ENCODE measurements at regions of chr13 and their contacts with region 1.

Region 1: DNA sequence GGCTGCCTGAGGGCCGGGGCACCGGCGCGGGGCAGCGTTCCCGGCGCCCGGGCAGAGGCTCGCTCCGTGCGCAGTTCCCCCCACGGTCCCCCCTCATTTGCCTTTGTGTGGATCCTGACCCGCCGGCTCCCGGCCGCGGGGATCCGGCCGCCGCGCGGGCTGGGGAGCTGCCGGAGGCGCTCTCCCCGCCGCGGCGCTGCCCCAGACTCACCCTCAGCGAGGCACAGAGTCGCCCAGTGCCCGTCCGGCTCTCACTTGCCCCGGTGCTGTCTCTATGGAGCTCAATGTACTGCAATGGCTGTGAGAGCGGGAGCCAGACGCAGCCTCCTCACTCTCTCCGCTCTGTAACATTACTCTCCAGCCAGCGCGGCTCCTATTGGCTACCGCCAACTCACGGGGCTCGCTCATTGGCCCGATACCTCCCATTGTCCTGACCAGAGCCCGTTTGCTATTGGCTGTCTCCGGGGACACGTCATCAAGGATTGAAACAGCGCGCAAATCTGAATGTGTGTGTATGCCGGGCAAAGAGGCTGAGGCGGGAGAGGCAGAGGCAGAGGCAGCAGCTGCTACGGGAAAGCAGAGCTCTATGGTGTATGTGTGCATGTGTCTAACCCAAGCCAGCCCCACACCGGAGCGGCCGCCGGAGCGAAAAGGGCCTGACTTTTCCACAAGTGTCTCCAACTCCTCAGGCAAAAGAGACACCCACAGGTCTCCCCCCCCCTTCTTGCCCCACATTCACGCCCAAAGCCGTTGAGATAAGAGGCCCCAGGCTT is at the start of gene HMGB1:
- DNase-seq: peak; percentile 93 to 98 (median 96)
- ATAC-seq: peak; percentile 85
- H3K4me3 ChIP-seq: peak within 1 kb of the TSS; percentile 54 to 97
- H3K4me3 Mint-ChIP-seq: peak within 1 kb of the TSS; percentile 95
- H3K27ac ChIP-seq: peak within 1 kb of the TSS; percentile 60 to 97
- H3K27ac Mint-ChIP-seq: peak within 1 kb of the TSS; percentile 99
- H3K4me1 ChIP-seq: peaks cover 26% of the 10 kb centered on the region
- H3K4me1 Mint-ChIP-seq: peaks cover 27% of the 10 kb centered on the region
- H3K27me3 ChIP-seq: no peaks in the 10 kb centered on the region
- H3K27me3 Mint-ChIP-seq: no peaks in the 10 kb centered on the region
- CTCF ChIP-seq: no peak
- total RNA-seq, gene HMGB1: 445 to 453 TPM

Region 2: DNA sequence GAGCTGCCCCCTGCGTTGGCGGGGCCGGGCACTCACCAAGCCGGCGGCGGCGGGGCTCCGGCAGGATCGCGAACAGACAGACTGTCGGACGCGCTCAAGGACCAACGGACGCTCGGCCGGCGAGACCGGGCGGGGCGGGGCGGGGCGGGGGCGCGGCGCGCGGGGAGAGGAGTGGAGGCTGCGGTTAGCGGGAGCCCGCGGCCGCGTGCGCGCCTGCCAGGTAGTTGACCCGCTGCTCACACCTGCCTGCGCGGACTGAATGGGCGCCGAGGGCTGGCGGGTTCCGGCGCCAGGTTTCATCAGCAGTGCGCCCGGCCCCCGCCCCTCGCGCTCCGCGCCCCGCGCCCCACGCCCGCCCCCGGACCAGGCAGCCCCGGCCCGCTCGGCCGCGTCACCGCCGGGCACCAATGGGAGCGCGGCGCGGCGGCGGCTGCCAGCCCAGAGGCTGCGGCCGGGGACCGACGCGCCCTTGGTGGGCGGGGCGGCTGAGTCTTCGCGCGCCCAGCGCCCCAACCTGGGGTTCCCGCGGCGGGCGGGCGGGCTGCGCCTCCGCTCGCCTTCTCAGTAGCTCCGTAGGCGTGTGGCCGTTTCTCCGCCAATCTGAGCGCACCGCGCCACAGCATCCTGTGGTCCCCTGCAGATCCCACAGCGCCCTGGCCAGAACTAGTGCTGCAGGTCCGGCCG is 870.2 kb before region 1 on chr13 and contains the start of gene SLC7A1:
- CTCF ChIA-PET with region 1: no interaction called
- POLR2A ChIA-PET with region 1: no interaction called
- intact Hi-C with region 1: loop called in 1 of 2 experiments (anchors 5 kb)
- DNase-seq: peak; percentile 67 to 93 (median 79)
- ATAC-seq: peak; percentile 88
- H3K4me3 ChIP-seq: peak within 1 kb of the TSS; percentile 61 to 74
- H3K4me3 Mint-ChIP-seq: peak within 1 kb of the TSS; percentile 90
- H3K27ac ChIP-seq: peak within 1 kb of the TSS; percentile 63 to 73
- H3K27ac Mint-ChIP-seq: peak within 1 kb of the TSS; percentile 85
- H3K4me1 ChIP-seq: peaks cover 15% of the 10 kb centered on the region
- H3K4me1 Mint-ChIP-seq: peaks cover 36% of the 10 kb centered on the region
- H3K27me3 ChIP-seq: no peaks in the 10 kb centered on the region
- H3K27me3 Mint-ChIP-seq: no peaks in the 10 kb centered on the region
- CTCF ChIP-seq: no peak
- total RNA-seq, gene SLC7A1: 15.2 to 18.4 TPM

Region 3: DNA sequence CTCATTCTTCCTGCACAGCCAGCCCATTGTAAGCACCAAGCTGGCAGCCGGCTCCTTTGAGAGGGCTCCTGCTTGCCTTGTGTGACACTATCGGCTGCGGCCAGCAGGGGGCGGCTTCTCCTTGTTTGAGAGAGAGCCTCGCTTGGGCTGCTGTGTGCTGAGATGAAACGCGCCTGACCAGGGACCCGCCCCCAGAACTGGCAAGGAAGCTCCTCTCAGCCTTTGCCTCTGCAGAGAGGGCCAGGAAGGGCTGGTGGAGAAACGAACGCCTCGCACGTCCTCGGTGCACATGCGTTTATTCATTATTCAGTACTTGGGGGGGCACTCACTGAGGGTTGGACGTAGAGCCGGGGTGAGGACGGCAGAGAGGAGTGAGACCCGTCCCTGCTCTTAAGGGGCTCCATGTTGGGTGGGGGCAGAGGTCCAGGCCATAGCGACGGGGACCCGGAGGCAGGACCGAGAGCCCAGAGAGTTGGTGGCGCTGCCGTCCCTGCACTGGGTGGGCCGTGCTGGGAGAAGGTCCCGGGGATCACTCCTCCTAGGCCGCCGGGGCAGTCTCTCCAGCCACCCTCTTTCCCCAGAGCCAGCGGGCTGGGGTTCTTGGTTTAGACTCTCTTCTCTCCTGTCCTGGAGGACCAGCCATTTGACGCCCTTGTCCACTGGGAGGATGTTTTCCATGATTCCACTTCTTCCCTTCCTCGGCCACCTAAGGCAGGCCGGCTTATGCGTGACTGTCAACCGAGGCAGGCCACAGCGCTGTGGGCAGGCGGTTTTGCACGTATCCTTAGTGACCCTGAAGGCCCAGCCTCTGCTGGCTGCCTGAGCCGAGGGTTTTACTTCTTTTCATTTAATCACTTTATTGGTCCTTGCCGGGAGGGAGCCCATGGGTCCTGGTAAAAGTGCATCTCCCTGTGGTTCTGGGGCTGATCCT is 332.9 kb before region 1 on chr13:
- CTCF ChIA-PET with region 1: interaction called, 28 read pairs
- POLR2A ChIA-PET with region 1: interaction called, 10 read pairs
- intact Hi-C with region 1: loop called (anchors 1 kb)
- DNase-seq: peak; percentile 92 to 100 (median 97)
- ATAC-seq: peak; percentile 100
- H3K4me3 ChIP-seq: no peak overlapping the region
- H3K4me3 Mint-ChIP-seq: peak overlapping the region; percentile 65
- H3K27ac ChIP-seq: no peak overlapping the region
- H3K27ac Mint-ChIP-seq: peak overlapping the region; percentile 77
- H3K4me1 ChIP-seq: peaks cover 9% of the 10 kb centered on the region
- H3K4me1 Mint-ChIP-seq: peaks cover 12% of the 10 kb centered on the region
- H3K27me3 ChIP-seq: no peaks in the 10 kb centered on the region
- H3K27me3 Mint-ChIP-seq: no peaks in the 10 kb centered on the region
- CTCF ChIP-seq: peak; percentile 79

Region 4: DNA sequence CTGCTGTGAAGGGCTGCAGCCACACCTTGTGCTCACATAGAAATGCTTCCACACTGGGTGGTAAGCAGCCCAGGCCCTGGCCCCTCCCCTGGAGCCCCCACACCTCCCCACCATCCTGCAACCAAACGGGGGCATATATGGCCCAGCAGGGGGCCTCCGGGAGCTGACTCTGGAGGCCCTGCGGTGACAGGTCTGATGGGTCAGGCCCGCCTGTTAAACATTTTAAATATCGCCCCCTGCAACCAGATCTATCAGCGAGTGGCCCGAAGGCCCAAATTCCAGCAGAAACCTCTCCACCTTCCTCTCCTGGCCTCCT is 110.4 kb before region 1 on chr13:
- CTCF ChIA-PET with region 1: interaction called, 13 read pairs
- POLR2A ChIA-PET with region 1: interaction called, 3 read pairs
- intact Hi-C with region 1: loop called (anchors 1 kb)
- DNase-seq: peak; percentile 12 to 76 (median 60)
- ATAC-seq: peak; percentile 96
- H3K4me3 ChIP-seq: no peak overlapping the region
- H3K4me3 Mint-ChIP-seq: peak overlapping the region; percentile 47
- H3K27ac ChIP-seq: no peak overlapping the region
- H3K27ac Mint-ChIP-seq: peak overlapping the region; percentile 37
- H3K4me1 ChIP-seq: peaks cover 18% of the 10 kb centered on the region
- H3K4me1 Mint-ChIP-seq: peaks cover 25% of the 10 kb centered on the region
- H3K27me3 ChIP-seq: no peaks in the 10 kb centered on the region
- H3K27me3 Mint-ChIP-seq: no peaks in the 10 kb centered on the region
- CTCF ChIP-seq: peak; percentile 64

Region 5: GRCh38 chr13:30520571-30520970 is 54.8 kb after region 1 on chr13:
- CTCF ChIA-PET with region 1: no interaction called
- POLR2A ChIA-PET with region 1: no interaction called
- intact Hi-C with region 1: no loop called
- DNase-seq: no peak
- ATAC-seq: no peak
- H3K4me3 ChIP-seq: no peak overlapping the region
- H3K4me3 Mint-ChIP-seq: no peak overlapping the region
- H3K27ac ChIP-seq: no peak overlapping the region
- H3K27ac Mint-ChIP-seq: no peak overlapping the region
- H3K4me1 ChIP-seq: peaks cover 9% of the 10 kb centered on the region
- H3K4me1 Mint-ChIP-seq: peaks cover 9% of the 10 kb centered on the region
- H3K27me3 ChIP-seq: no peaks in the 10 kb centered on the region
- H3K27me3 Mint-ChIP-seq: no peaks in the 10 kb centered on the region
- CTCF ChIP-seq: no peak

Region 6: GRCh38 chr13:30551189-30551588 is 85.4 kb after region 1 on chr13:
- CTCF ChIA-PET with region 1: interaction called, 3 read pairs
- POLR2A ChIA-PET with region 1: no interaction called
- intact Hi-C with region 1: loop called (anchors 1 to 5 kb)
- DNase-seq: peak in 3 of 9 experiments; percentile 11 to 67 (median 52)
- ATAC-seq: peak; percentile 83
- H3K4me3 ChIP-seq: no peak overlapping the region
- H3K4me3 Mint-ChIP-seq: no peak overlapping the region
- H3K27ac ChIP-seq: no peak overlapping the region
- H3K27ac Mint-ChIP-seq: no peak overlapping the region
- H3K4me1 ChIP-seq: no peaks in the 10 kb centered on the region
- H3K4me1 Mint-ChIP-seq: peaks cover 5% of the 10 kb centered on the region
- H3K27me3 ChIP-seq: no peaks in the 10 kb centered on the region
- H3K27me3 Mint-ChIP-seq: no peaks in the 10 kb centered on the region
- CTCF ChIP-seq: peak; percentile 33

Region 7: DNA sequence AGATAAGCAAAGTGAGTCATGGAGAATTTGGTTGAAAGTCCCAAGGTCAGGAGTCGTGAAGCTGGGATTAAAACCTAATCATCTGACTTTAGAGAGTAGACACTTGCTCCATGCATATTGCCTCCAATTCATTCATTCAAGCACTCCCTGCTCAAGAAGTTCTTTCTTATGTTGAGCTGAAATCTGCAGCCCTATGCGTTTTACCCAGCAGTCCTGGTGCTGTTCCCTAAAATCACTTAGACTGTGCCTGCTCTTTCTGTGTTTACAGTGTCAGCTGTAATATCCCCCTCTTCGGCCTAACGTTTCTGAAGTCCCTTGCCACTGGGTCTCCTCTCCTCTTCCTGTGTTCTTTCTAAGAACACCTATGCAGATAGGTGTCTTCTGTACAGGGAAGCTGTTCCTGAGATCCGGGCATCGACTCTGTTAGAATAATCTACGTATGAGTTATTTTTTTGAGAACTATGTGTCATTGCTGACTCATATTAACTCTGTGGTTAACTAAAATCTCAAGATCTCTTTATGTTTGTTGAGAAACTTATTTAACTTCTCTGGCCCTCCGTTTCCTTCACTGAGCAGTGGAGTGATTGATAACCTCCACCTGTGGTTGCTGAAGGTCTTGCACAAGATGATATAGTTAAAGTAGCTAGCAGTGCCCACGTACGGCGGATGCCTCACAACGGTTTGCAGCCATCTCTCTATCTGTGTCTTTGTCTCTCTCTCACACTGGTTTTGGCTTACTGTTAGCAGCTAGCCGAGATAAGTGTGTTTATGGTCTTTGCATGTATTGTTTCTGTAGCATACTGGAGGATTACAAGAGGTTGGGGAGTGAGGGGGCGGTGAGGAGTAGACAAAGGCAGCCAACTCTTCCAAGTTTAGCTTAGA is 274.2 kb after region 1 on chr13:
- CTCF ChIA-PET with region 1: no interaction called
- POLR2A ChIA-PET with region 1: no interaction called
- intact Hi-C with region 1: loop called (anchors 5 kb)
- DNase-seq: peak in 8 of 9 experiments; percentile 34 to 87 (median 62)
- ATAC-seq: peak; percentile 54
- H3K4me3 ChIP-seq: peak overlapping the region; percentile 25 to 33
- H3K4me3 Mint-ChIP-seq: peak overlapping the region; percentile 73
- H3K27ac ChIP-seq: peak overlapping the region; percentile 28 to 68
- H3K27ac Mint-ChIP-seq: peak overlapping the region; percentile 82
- H3K4me1 ChIP-seq: peaks cover 73% of the 10 kb centered on the region
- H3K4me1 Mint-ChIP-seq: peaks cover 83% of the 10 kb centered on the region
- H3K27me3 ChIP-seq: no peaks in the 10 kb centered on the region
- H3K27me3 Mint-ChIP-seq: no peaks in the 10 kb centered on the region
- CTCF ChIP-seq: no peak

Measured in CD8-positive, alpha-beta T cell (primary cell).